AG04449 (cell line): ENCODE measurements at regions of chr16 and their contacts with region 1.

Region 1: DNA sequence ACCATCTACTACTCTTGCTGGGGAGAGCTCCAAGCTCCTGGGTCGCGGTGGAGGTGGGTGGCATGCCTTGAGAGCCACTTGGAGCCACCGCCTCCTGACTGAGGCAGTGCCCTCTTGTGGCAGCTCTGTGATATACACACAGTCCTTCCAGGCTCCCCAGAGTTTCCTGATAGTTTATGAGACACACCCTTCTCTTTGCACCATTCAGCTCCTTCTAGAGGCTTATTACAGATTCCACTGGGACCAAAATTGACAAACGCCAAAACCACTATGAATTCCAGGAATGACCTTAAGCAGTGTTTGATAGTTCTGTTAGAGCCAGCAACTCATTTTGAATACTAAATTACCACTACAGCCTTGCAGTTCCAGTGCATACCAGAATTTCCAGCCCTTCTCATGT is 170.1 kb upstream of the CDH13 start:
- DNase-seq: no peak
- H3K4me3 ChIP-seq: no peak overlapping the region
- CTCF ChIP-seq: peak; percentile 79

Region 2: DNA sequence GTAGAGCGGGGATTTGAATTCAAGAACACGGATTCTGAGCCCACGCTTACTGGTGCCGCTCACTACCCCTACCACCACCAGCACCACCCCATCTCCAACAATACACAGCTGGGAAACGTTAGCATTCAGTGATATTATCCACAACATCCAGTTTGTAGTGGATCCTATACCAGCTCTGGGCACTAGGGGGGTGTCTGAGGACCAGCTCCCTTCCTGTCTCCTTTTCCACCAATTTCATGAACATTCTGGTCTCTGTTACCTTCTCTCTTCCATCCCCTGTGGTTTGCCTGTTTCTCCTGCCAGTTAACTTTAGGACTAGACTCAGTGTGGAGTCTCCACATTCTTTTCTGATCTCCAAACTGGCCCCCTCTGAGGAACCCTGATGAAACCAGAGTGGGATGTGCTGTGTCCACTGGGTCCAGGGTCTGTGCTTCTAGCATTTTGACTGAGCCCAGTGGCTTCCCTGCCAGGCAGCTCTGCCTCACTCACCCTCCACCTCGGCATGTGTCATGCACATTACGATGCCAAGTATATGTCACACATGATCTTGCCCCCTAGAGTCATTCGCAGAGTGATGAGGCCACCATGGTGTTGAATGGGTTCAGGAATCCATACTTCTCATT is 16.9 kb before region 1 on chr16:
- CTCF ChIA-PET with region 1: interaction called, 20 read pairs
- POLR2A ChIA-PET with region 1: interaction called, 3 read pairs
- DNase-seq: no peak
- H3K4me3 ChIP-seq: no peak overlapping the region
- CTCF ChIP-seq: peak; percentile 64

Region 3: DNA sequence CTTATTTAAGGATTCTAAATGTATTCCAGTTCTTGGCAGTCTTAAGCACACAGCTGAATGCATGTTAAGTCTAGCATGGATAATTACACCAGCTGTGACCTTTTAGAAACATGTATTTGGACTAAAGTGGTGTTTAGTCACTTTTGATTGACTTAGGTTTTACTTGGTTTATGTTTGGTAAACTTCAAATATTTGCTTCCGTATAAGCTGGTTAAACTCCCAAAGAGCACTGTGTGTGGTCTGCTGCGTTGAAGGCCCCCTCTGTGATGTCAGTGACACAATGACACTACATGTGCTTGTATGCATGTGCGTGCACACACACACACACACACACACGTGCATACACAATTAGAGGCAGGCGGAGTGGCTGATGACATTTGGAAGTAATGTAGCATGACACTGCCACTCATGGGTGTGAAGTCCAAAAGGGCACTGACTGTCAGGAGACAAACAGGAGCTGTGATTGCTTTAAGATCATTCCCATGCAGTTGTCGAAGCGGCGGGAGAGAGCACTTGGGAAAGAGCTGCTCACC is 14.0 kb after region 1 on chr16:
- CTCF ChIA-PET with region 1: interaction called, 23 read pairs
- POLR2A ChIA-PET with region 1: no interaction called
- DNase-seq: no peak
- H3K4me3 ChIP-seq: no peak overlapping the region
- CTCF ChIP-seq: no peak

Region 4: GRCh38 chr16:82481455-82481854 is 24.8 kb after region 1 on chr16:
- CTCF ChIA-PET with region 1: interaction called, 11 read pairs
- POLR2A ChIA-PET with region 1: no interaction called
- DNase-seq: no peak
- H3K4me3 ChIP-seq: no peak overlapping the region
- CTCF ChIP-seq: no peak

Region 5: DNA sequence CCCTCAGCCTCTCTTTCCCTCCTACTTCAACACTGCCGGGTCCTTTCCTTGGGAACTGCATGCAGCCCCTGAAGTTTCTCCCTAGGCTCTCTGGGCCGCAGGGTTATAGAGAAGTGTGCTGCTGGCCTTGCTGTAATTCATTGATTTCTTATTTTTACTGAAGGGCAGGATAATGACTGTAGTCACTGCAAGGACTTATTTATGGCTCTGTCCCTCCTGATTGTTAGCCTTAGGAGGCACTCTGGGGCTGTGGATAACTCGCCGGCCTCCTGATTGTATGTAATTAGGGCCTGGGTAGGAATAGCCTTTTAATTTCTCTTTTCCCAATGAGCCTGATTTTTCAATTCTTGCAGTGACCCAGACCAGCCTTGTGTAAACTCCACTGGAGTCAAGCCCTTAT is 31.8 kb after region 1 on chr16:
- CTCF ChIA-PET with region 1: interaction called, 10 read pairs
- POLR2A ChIA-PET with region 1: no interaction called
- DNase-seq: no peak
- H3K4me3 ChIP-seq: no peak overlapping the region
- CTCF ChIP-seq: no peak